Activated CD4-positive, alpha-beta memory T cell treated with anti-CD3 and anti-CD28 coated beads for 36 hours (primary cell): ENCODE measurements at regions of chr13 and their contacts with region 1.

Region 1: DNA sequence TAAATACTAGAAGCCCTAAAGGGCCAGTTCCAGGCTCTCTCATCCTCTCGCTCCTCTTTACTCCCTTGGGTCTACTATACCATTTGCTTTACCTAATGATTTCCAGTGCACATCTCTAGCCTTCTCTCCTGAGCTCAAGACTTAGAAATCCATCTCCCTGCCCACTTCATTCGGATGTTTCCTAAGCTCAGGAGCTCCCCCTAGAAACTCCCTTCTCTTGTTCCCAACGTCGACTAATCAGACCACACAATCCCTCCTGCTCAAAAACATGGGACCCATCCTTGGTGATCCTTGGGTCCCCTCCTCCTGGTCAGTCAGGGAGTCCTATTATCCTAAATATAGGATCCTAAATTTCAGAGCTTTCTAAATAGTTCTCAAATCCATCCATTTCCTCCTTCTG is 21.1 kb upstream of the STK24 start:
- DNase-seq: no peak
- H3K4me3 Mint-ChIP-seq: no peak overlapping the region
- H3K27ac Mint-ChIP-seq: no peak overlapping the region
- H3K4me1 Mint-ChIP-seq: peaks cover 13% of the 10 kb centered on the region
- H3K27me3 Mint-ChIP-seq: no peaks in the 10 kb centered on the region

Region 2: GRCh38 chr13:98586400-98587345 is 11.4 kb before region 1 on chr13:
- CTCF ChIA-PET with region 1: interaction called, 3 read pairs
- POLR2A ChIA-PET with region 1: no interaction called
- intact Hi-C with region 1: loop called (anchors 1 kb)
- DNase-seq: no peak
- H3K4me3 Mint-ChIP-seq: no peak overlapping the region
- H3K27ac Mint-ChIP-seq: no peak overlapping the region
- H3K4me1 Mint-ChIP-seq: peaks cover 15% of the 10 kb centered on the region
- H3K27me3 Mint-ChIP-seq: no peaks in the 10 kb centered on the region

Region 3: GRCh38 chr13:98664039-98664438 is 66.0 kb after region 1 on chr13:
- CTCF ChIA-PET with region 1: no interaction called
- POLR2A ChIA-PET with region 1: no interaction called
- intact Hi-C with region 1: loop called (anchors 2 kb)
- DNase-seq: peak; percentile 87
- H3K4me3 Mint-ChIP-seq: no peak overlapping the region
- H3K27ac Mint-ChIP-seq: peak overlapping the region; percentile 56
- H3K4me1 Mint-ChIP-seq: peaks cover 16% of the 10 kb centered on the region
- H3K27me3 Mint-ChIP-seq: peaks cover 9% of the 10 kb centered on the region

Region 4: GRCh38 chr13:98706446-98707110 is 108.5 kb after region 1 on chr13:
- CTCF ChIA-PET with region 1: no interaction called
- POLR2A ChIA-PET with region 1: no interaction called
- intact Hi-C with region 1: no loop called
- DNase-seq: no peak
- H3K4me3 Mint-ChIP-seq: no peak overlapping the region
- H3K27ac Mint-ChIP-seq: no peak overlapping the region
- H3K4me1 Mint-ChIP-seq: peaks cover 2% of the 10 kb centered on the region
- H3K27me3 Mint-ChIP-seq: peaks cover 14% of the 10 kb centered on the region